Heart right ventricle (tissue), 16 donors: ENCODE measurements at regions of chr1 and their contacts with region 1.

Region 1: DNA sequence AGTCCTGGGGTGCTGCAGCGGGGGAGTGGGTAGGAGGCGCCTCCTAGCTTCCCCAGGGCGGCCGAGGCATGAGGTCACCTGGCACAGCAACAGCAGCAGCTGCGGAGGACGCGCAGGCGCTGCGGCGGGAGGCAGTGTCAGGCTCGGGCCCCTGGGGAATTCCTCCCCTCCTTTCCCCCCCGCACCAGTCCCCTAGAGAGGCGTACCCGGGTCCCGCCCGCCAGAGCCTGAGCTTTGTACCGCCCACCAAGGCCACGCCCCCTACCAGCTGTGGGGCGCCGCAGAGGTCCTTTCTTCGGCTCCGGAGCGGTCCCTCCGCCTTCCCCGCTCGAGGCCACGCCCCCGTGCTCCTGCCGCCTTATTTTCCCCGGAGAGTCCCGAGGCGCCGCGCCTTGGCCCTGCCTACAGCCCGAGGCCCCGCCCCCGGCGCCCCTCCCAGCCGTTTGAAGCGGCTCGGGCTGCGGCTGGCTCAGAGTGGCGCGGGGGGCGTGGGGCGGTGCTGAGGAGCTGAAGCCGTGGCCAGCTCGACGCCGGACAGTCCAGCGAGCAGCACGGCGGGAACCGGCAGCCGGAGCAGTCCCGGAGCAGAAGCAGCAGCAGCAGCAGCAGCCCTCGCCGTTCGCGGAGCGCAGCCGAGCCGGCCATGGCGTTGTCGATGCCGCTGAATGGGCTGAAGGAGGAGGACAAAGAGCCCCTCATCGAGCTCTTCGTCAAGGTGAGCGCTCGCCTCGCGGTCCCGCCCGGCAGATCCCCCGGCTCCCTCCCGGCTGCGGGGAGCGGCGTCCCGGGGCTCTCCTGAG is at the start of gene CLIC4:
- DNase-seq: peak; percentile 100
- ATAC-seq: peak; percentile 94 to 99 (median 97)
- H3K4me3 ChIP-seq: peak within 1 kb of the TSS; percentile 80 to 98 (median 94)
- H3K27ac ChIP-seq: peak within 1 kb of the TSS; percentile 94 to 99 (median 96)
- H3K4me1 ChIP-seq: peaks cover 0 to 63% (median 43%) of the 10 kb centered on the region in 9 donors
- H3K27me3 ChIP-seq: no peaks in the 10 kb centered on the region
- CTCF ChIP-seq: peak in 7 of 9 donors; percentile 11 to 72 (median 38)
- total RNA-seq, gene CLIC4: 256 to 511 (median 353) TPM

Region 2: GRCh38 chr1:24438423-24438901 is 306.6 kb before region 1 on chr1:
- intact Hi-C with region 1: no loop called
- DNase-seq: peak; percentile 59 to 67
- ATAC-seq: peak; percentile 78 to 92 (median 86)
- H3K4me3 ChIP-seq: peak overlapping the region in 2 of 10 donors; percentile 10 to 13
- H3K27ac ChIP-seq: peak overlapping the region in 6 of 10 donors; percentile 43 to 70 (median 56)
- H3K4me1 ChIP-seq: peaks cover 2 to 41% (median 21%) of the 10 kb centered on the region in 9 donors
- H3K27me3 ChIP-seq: no peaks in the 10 kb centered on the region
- CTCF ChIP-seq: peak in 1 of 9 donors; percentile 3

Region 3: DNA sequence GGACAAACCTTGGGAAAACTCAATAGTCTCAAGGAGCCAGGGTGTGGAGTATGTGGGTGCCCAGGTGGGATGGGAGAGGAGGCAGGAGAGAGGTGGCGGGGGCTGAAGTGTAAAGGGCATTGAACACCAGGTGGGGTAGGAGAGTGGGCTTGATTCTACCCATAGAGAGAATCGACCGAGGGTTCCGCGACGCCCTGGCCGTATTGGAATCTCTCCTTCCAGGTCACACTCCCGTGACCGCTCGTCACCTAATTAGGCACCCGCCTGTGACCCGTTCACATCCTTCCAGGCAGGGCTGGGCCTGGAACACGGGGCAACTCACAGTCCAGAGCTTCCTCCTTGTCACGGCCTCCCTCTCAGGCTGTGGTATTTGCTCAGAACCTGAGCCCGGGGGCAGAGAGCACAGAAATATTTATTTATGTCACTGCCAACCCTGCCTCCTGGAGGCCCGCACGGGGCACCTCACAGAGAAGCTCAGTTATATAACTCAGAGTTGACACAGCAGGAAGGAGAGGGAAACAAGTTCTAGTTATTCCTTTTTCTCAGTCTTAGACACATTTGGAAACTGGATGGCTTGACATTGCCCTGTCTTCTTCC is 177.2 kb before region 1 on chr1:
- intact Hi-C with region 1: no loop called
- DNase-seq: no peak
- ATAC-seq: peak in 7 of 8 donors; percentile 16 to 77 (median 64)
- H3K4me3 ChIP-seq: no peak overlapping the region
- H3K27ac ChIP-seq: peak overlapping the region in 1 of 10 donors; percentile 34
- H3K4me1 ChIP-seq: peaks cover 0 to 6% (median 0%) of the 10 kb centered on the region in 9 donors
- H3K27me3 ChIP-seq: no peaks in the 10 kb centered on the region
- CTCF ChIP-seq: no peak

Region 4: GRCh38 chr1:24673336-24673735 is 71.8 kb before region 1 on chr1:
- intact Hi-C with region 1: no loop called
- DNase-seq: no peak
- ATAC-seq: no peak
- H3K4me3 ChIP-seq: no peak overlapping the region
- H3K27ac ChIP-seq: no peak overlapping the region
- H3K4me1 ChIP-seq: no peaks in the 10 kb centered on the region
- H3K27me3 ChIP-seq: no peaks in the 10 kb centered on the region
- CTCF ChIP-seq: no peak

Region 5: DNA sequence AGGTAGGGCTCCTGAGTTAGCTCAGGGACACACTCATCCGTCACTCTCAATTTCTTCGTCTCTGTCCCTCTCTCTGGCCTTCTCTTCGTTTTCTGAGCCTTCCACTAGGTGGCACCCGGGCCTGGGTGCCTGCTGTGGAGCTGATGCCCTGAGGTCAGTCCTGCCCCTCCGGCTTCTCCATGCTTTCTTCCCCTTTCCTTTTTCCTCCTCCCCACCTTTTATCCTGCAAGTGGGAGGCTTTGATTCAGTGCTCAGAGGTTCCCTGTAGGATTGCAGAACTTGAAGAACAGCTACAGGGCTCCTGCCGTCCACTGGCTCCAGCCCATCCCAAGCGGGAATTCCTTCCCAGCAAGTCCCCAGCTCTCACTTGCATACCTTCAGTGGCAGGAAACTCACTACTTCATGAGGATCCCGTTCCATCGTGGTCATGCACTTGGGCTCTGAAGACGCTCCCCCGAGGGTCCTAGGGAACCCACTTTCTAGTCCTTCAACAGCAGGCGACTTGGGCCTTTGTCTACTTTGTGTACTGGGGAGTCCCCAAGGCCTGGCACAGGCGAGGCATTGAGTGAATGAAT is 56.4 kb before region 1 on chr1:
- intact Hi-C with region 1: loop called in 6 of 10 experiments (anchors 2 to 5 kb)
- DNase-seq: peak; percentile 72 to 78
- ATAC-seq: peak; percentile 78 to 94 (median 91)
- H3K4me3 ChIP-seq: no peak overlapping the region
- H3K27ac ChIP-seq: peak overlapping the region in 7 of 10 donors; percentile 3 to 44 (median 28)
- H3K4me1 ChIP-seq: peaks cover 0 to 33% (median 20%) of the 10 kb centered on the region in 9 donors
- H3K27me3 ChIP-seq: no peaks in the 10 kb centered on the region
- CTCF ChIP-seq: peak; percentile 76 to 94 (median 88)

Region 6: DNA sequence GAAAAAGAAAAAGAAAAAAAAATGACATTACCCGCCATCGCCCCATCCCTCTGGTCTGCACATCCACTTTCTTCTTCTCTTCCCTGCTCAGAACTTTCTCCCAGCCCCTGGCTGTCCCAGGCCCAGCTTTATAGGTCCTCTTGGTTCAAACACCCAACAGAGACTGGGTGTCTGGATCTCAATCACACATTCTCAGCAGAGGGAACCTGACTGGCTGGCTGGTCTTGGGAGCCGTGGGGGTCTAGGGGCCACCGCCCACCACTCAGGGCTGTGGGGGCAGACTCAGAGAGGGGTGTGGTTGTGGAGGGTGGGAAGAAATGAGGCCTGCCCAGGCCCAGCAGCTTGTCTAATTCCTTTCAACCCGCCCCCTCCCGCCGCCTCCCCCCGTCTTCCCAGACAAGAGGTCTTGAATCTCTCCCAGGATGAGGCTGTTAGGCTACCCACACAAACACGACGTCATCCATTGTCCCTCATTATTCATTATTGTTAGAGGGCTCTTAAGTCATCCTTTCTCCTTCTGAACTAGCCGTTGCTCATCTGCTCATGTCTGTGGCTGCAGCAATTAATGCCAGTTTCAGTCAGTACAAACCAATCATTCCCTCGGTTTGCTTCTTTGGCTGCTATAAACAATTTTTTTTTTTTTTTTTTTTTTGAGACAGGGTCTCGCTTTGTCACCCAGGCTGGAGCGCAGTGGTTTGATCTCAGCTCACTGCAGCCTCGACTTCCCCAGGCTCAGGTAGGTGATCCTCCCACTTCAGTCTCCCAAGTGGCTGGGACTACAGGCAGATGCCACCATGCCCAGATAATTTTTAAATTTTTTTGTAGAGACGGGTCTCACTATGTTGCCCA is 40.5 kb before region 1 on chr1:
- intact Hi-C with region 1: loop called in 3 of 10 experiments (anchors 5 kb)
- DNase-seq: peak in 1 of 2 donors; percentile 50
- ATAC-seq: peak in 5 of 8 donors; percentile 15 to 46 (median 34)
- H3K4me3 ChIP-seq: peak overlapping the region in 5 of 10 donors; percentile 9 to 31 (median 25)
- H3K27ac ChIP-seq: peak overlapping the region; percentile 70 to 92 (median 83)
- H3K4me1 ChIP-seq: peaks cover 0 to 43% (median 31%) of the 10 kb centered on the region in 9 donors
- H3K27me3 ChIP-seq: no peaks in the 10 kb centered on the region
- CTCF ChIP-seq: no peak

Region 7: GRCh38 chr1:24786191-24786590 is 41.1 kb after region 1 on chr1:
- intact Hi-C with region 1: loop called in 1 of 10 experiments (anchors 5 kb)
- DNase-seq: no peak
- ATAC-seq: peak in 6 of 8 donors; percentile 48 to 66 (median 59)
- H3K4me3 ChIP-seq: no peak overlapping the region
- H3K27ac ChIP-seq: peak overlapping the region in 4 of 10 donors; percentile 0 to 47 (median 5)
- H3K4me1 ChIP-seq: peaks cover 0 to 49% (median 35%) of the 10 kb centered on the region in 9 donors
- H3K27me3 ChIP-seq: no peaks in the 10 kb centered on the region
- CTCF ChIP-seq: no peak

Region 8: GRCh38 chr1:24830680-24831272 is 85.7 kb after region 1 on chr1:
- intact Hi-C with region 1: loop called (anchors 2 to 10 kb)
- DNase-seq: peak in 1 of 2 donors; percentile 19
- ATAC-seq: peak in 7 of 8 donors; percentile 72 to 85 (median 77)
- H3K4me3 ChIP-seq: no peak overlapping the region
- H3K27ac ChIP-seq: peak overlapping the region in 1 of 10 donors; percentile 23
- H3K4me1 ChIP-seq: peaks cover 3 to 67% (median 61%) of the 10 kb centered on the region in 9 donors
- H3K27me3 ChIP-seq: no peaks in the 10 kb centered on the region
- CTCF ChIP-seq: peak; percentile 75 to 95 (median 81)

Region 9: GRCh38 chr1:25128121-25128621 is 383.1 kb after region 1 on chr1:
- intact Hi-C with region 1: no loop called
- DNase-seq: no peak
- ATAC-seq: no peak
- H3K4me3 ChIP-seq: no peak overlapping the region
- H3K27ac ChIP-seq: no peak overlapping the region
- H3K4me1 ChIP-seq: peaks cover 0 to 13% (median 0%) of the 10 kb centered on the region in 9 donors
- H3K27me3 ChIP-seq: peaks cover 0 to 20% (median 5%) of the 10 kb centered on the region in 7 donors
- CTCF ChIP-seq: no peak